Ascending aorta (tissue), 2 donors: ENCODE measurements at regions of chr16 and their contacts with region 1.

Region 1: DNA sequence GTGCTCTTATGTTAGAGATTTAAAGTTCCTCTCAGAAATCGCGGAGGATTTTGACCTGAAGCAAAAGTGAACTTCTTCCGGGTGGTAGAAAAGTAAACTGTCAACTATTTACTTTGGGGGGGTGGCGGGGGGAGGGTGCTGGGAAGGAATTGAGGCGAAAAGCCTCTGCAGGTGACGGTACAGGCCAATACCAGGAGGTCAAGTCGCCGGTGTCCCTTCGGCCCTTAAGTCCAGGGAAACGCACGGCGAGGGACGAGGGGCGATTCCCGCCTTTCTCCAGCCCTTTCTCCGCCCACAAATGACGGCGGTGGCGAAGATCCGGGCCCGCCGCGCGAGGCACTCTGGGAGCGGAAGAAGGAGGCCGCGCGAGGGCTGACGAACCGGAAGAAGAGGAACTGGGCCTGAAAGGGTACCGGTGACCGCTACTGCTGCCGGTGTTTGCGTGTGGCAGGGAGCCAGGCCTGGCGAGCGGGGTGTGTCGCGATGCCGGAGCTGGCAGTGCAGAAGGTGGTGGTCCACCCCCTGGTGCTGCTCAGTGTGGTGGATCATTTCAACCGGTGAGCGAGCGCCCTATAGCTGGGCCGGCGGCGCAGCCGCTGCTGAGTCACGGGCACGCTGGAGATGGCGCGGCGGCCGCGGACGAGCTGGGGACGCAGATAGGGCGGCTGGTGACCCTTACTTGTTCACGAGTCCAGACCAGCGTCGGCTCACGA is at the start of gene PSMD7:
- DNase-seq: peak; percentile 62 to 96
- H3K4me3 ChIP-seq: peak within 1 kb of the TSS; percentile 75 to 98
- H3K27ac ChIP-seq: peak within 1 kb of the TSS; percentile 89 to 95
- H3K4me1 ChIP-seq: peaks cover 3 to 18% of the 10 kb centered on the region in 2 donors
- H3K27me3 ChIP-seq: no peaks in the 10 kb centered on the region
- CTCF ChIP-seq: no peak
- total RNA-seq, gene PSMD7: 60.3 TPM

Region 2: GRCh38 chr16:73771196-73772064 is 525.2 kb before region 1 on chr16:
- intact Hi-C with region 1: loop called (anchors 2 kb)
- DNase-seq: no peak
- H3K4me3 ChIP-seq: no peak overlapping the region
- H3K27ac ChIP-seq: peak overlapping the region; percentile 64 to 82
- H3K4me1 ChIP-seq: peaks cover 15 to 41% of the 10 kb centered on the region in 2 donors
- H3K27me3 ChIP-seq: no peaks in the 10 kb centered on the region
- CTCF ChIP-seq: no peak

Region 3: DNA sequence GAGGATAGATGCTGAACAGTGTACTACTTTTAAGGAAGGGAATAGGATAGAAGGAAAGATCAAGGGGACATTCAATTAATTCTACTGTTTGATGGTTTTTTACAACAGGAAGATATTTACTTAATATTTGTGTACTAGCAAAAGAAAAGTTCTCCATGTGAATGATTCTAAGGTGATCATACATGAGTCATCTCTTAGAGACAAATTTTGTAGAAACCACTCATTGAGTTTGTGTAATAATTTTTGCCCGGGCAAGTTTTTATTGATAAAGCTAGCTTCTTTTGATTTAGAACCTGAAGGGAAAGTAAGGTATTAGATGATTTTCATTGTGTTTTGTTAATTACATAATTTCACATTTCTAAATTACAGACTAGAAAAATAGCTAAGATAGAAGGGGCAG is 172.8 kb before region 1 on chr16:
- intact Hi-C with region 1: no loop called
- DNase-seq: no peak
- H3K4me3 ChIP-seq: no peak overlapping the region
- H3K27ac ChIP-seq: no peak overlapping the region
- H3K4me1 ChIP-seq: no peaks in the 10 kb centered on the region
- H3K27me3 ChIP-seq: no peaks in the 10 kb centered on the region
- CTCF ChIP-seq: no peak

Region 4: GRCh38 chr16:74372369-74372768 is 75.8 kb after region 1 on chr16:
- intact Hi-C with region 1: loop called (anchors 1 kb)
- DNase-seq: no peak
- H3K4me3 ChIP-seq: no peak overlapping the region
- H3K27ac ChIP-seq: no peak overlapping the region
- H3K4me1 ChIP-seq: no peaks in the 10 kb centered on the region
- H3K27me3 ChIP-seq: no peaks in the 10 kb centered on the region
- CTCF ChIP-seq: no peak